ENCODE measurements at regions of chr5 and their contacts with region 1.

Region 1: GRCh38 chr5:61658592-61659008 is 326.5 kb downstream of the ZSWIM6 start:
- DNase-seq: peak; percentile 75
- CTCF ChIP-seq: peak; percentile 99

Region 2: GRCh38 chr5:61055434-61056006 is 603.1 kb before region 1 on chr5:
- CTCF ChIA-PET with region 1: interaction called, 52 read pairs
- POLR2A ChIA-PET with region 1: no interaction called
- DNase-seq: peak; percentile 23
- CTCF ChIP-seq: peak; percentile 59

Region 3: GRCh38 chr5:61625681-61626621 is 32.6 kb before region 1 on chr5:
- CTCF ChIA-PET with region 1: interaction called, 14 read pairs
- POLR2A ChIA-PET with region 1: no interaction called
- DNase-seq: peak; percentile 33
- CTCF ChIP-seq: no peak

Region 4: DNA sequence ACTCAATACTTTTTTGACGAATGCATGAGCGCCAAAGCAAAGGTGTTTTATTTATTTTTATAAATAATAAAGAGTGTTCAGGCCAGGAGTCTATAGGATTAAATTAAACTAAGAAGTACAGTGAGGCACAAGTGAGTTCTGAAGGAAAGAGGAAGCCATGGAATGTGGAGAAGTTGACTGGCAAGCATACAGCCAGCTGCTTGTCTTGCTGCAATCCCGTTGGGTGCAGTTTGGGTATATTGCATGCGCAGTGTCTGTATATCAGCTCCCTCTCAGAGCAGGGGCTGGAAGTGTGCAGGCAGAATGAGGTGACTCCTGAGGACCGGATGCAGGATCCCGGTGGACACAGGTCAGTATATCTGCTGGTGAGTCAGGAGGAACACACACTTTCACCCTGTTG is 10.9 kb before region 1 on chr5:
- CTCF ChIA-PET with region 1: interaction called, 27 read pairs
- POLR2A ChIA-PET with region 1: no interaction called
- DNase-seq: no peak
- CTCF ChIP-seq: no peak

Region 5: GRCh38 chr5:61680247-61680646 is 21.6 kb after region 1 on chr5:
- CTCF ChIA-PET with region 1: interaction called, 10 read pairs
- POLR2A ChIA-PET with region 1: no interaction called
- DNase-seq: no peak
- CTCF ChIP-seq: no peak